Mammary epithelial cell (primary cell): ENCODE measurements at regions of chr17 and their contacts with region 1.

Region 1: GRCh38 chr17:55356434-55357328 is 65.0 kb downstream of the MMD start:
- DNase-seq: peak; percentile 58
- H3K4me3 ChIP-seq: no peak overlapping the region
- H3K27ac ChIP-seq: no peak overlapping the region
- H3K4me1 ChIP-seq: no peaks in the 10 kb centered on the region
- H3K27me3 ChIP-seq: no peaks in the 10 kb centered on the region
- CTCF ChIP-seq: peak; percentile 79 to 84

Region 2: DNA sequence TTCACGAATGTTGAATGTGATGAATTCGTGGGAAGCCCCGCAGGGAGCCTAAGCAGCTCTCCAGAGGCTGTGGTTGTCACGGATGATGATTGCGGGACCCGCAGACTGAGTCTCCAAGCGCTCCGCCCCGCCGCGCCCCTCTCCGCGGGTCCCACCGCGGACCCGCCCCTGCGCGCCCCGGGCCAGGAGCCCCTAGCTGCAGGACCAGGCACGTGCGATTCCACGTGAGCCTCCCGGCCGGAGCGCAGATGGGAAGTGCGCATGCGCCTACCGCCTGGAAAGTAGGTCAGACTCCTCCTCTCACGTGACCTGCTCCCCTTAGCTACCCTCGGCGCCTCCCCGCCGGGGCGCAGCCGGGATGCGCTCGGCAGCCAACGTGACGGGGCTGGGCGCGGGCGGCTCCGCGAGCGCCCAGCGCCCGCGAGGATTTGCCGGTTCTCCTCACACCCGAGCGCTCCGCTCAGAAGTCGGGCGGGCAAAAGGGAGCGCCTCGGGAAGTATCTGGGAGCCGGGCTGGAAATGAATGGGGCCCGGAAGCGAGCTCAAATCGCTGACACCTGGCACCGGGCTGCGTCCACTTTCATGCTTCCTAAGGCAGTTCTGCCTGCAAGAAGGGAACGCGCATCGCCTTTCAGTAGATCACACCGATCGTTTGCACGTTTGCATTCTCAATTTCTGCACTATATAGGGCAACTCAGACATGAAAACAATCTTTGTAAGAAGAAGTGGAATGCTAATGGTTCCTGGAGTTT is 118.3 kb before region 1 on chr17:
- CTCF ChIA-PET with region 1: no interaction called
- dilution Hi-C with region 1: no loop called
- in situ Hi-C with region 1: no loop called
- intact Hi-C with region 1: loop called (anchors 2 kb)
- DNase-seq: peak; percentile 89
- H3K4me3 ChIP-seq: peak overlapping the region; percentile 33 to 65 (median 65)
- H3K27ac ChIP-seq: peak overlapping the region; percentile 20
- H3K4me1 ChIP-seq: peaks cover 9% of the 10 kb centered on the region
- H3K27me3 ChIP-seq: no peaks in the 10 kb centered on the region
- CTCF ChIP-seq: no peak

Region 3: GRCh38 chr17:55295411-55296170 is 61.1 kb before region 1 on chr17:
- CTCF ChIA-PET with region 1: no interaction called
- dilution Hi-C with region 1: no loop called
- in situ Hi-C with region 1: no loop called
- intact Hi-C with region 1: no loop called
- DNase-seq: peak; percentile 51
- H3K4me3 ChIP-seq: no peak overlapping the region
- H3K27ac ChIP-seq: no peak overlapping the region
- H3K4me1 ChIP-seq: no peaks in the 10 kb centered on the region
- H3K27me3 ChIP-seq: no peaks in the 10 kb centered on the region
- CTCF ChIP-seq: peak; percentile 86 to 91

Region 4: GRCh38 chr17:55421179-55421934 is 64.7 kb after region 1 on chr17 and contains the start of gene MMD:
- CTCF ChIA-PET with region 1: no interaction called
- dilution Hi-C with region 1: no loop called
- in situ Hi-C with region 1: no loop called
- intact Hi-C with region 1: loop called (anchors 5 kb)
- DNase-seq: peak; percentile 63
- H3K4me3 ChIP-seq: peak within 1 kb of the TSS; percentile 84 to 92 (median 85)
- H3K27ac ChIP-seq: peak within 1 kb of the TSS; percentile 89
- H3K4me1 ChIP-seq: peaks cover 10% of the 10 kb centered on the region
- H3K27me3 ChIP-seq: no peaks in the 10 kb centered on the region
- CTCF ChIP-seq: no peak
- total RNA-seq, gene MMD: 7.8 to 9.0 TPM

Region 5: GRCh38 chr17:55496094-55496881 is 139.6 kb after region 1 on chr17:
- CTCF ChIA-PET with region 1: no interaction called
- dilution Hi-C with region 1: no loop called
- in situ Hi-C with region 1: no loop called
- intact Hi-C with region 1: loop called (anchors 5 kb)
- DNase-seq: peak; percentile 67
- H3K4me3 ChIP-seq: no peak overlapping the region
- H3K27ac ChIP-seq: no peak overlapping the region
- H3K4me1 ChIP-seq: no peaks in the 10 kb centered on the region
- H3K27me3 ChIP-seq: no peaks in the 10 kb centered on the region
- CTCF ChIP-seq: no peak